ENCODE measurements at regions of chr1 and their contacts with region 1.

Region 1: DNA sequence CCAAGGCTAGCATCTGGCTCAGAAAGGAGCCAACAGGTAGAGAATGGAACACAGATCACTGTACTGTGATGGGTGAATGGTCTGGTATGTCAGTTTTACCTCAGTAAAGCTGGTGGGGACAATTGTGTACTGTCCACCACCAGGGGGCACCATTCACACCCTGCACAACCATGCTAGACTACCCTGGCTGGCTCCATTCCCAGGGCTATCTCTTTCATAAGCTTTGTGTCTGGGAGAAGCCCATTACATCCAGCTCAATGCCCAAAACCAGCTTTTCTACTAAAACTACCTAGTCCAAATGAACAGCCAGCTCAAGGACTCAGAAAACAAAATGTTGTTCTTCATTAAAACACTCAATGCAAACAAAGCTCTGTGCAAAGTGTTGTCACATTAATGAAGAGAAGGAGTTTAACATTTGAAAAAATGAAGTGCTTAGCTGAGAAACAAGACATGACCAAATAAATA is 62.0 kb upstream of the RASAL2 start:
- DNase-seq: peak in 3 of 4 donors; percentile 83 to 91 (median 86)
- ATAC-seq: peak; percentile 95
- H3K4me3 ChIP-seq: no peak overlapping the region
- H3K27ac ChIP-seq: no peak overlapping the region
- H3K4me1 ChIP-seq: peaks cover 0 to 18% of the 10 kb centered on the region in 2 donors
- H3K27me3 ChIP-seq: no peaks in the 10 kb centered on the region
- CTCF ChIP-seq: peak; percentile 81 to 88

Region 2: GRCh38 chr1:178273707-178274410 is 242.0 kb after region 1 on chr1:
- intact Hi-C with region 1: loop called in 1 of 2 experiments (anchors 10 kb)
- DNase-seq: no peak
- ATAC-seq: no peak
- H3K4me3 ChIP-seq: no peak overlapping the region
- H3K27ac ChIP-seq: no peak overlapping the region
- H3K4me1 ChIP-seq: peaks cover 0 to 37% of the 10 kb centered on the region in 2 donors
- H3K27me3 ChIP-seq: no peaks in the 10 kb centered on the region
- CTCF ChIP-seq: no peak

Region 3: GRCh38 chr1:178294654-178295053 is 262.8 kb after region 1 on chr1:
- intact Hi-C with region 1: no loop called
- DNase-seq: no peak
- ATAC-seq: no peak
- H3K4me3 ChIP-seq: no peak overlapping the region
- H3K27ac ChIP-seq: no peak overlapping the region
- H3K4me1 ChIP-seq: peaks cover 0 to 3% of the 10 kb centered on the region in 2 donors
- H3K27me3 ChIP-seq: no peaks in the 10 kb centered on the region
- CTCF ChIP-seq: no peak